B cell (primary cell): ENCODE measurements at regions of chr19 and their contacts with region 1.

Region 1: GRCh38 chr19:43983912-43984686 is at the start of gene ZNF155:
- DNase-seq: peak; percentile 84
- ATAC-seq: peak; percentile 92
- H3K4me3 ChIP-seq: peak within 1 kb of the TSS; percentile 79 to 93 (median 85)
- H3K4me3 Mint-ChIP-seq: peak within 1 kb of the TSS; percentile 95
- H3K27ac ChIP-seq: peak within 1 kb of the TSS; percentile 61 to 79
- H3K27ac Mint-ChIP-seq: peak within 1 kb of the TSS; percentile 80
- H3K4me1 ChIP-seq: peaks cover 3 to 14% of the 10 kb centered on the region in 2 donors
- H3K4me1 Mint-ChIP-seq: peaks cover 12% of the 10 kb centered on the region
- H3K27me3 ChIP-seq: no peaks in the 10 kb centered on the region
- H3K27me3 Mint-ChIP-seq: no peaks in the 10 kb centered on the region
- CTCF ChIP-seq: no peak
- total RNA-seq, gene ZNF155: 8.4 and 8.9 TPM in 2 replicates

Region 2: DNA sequence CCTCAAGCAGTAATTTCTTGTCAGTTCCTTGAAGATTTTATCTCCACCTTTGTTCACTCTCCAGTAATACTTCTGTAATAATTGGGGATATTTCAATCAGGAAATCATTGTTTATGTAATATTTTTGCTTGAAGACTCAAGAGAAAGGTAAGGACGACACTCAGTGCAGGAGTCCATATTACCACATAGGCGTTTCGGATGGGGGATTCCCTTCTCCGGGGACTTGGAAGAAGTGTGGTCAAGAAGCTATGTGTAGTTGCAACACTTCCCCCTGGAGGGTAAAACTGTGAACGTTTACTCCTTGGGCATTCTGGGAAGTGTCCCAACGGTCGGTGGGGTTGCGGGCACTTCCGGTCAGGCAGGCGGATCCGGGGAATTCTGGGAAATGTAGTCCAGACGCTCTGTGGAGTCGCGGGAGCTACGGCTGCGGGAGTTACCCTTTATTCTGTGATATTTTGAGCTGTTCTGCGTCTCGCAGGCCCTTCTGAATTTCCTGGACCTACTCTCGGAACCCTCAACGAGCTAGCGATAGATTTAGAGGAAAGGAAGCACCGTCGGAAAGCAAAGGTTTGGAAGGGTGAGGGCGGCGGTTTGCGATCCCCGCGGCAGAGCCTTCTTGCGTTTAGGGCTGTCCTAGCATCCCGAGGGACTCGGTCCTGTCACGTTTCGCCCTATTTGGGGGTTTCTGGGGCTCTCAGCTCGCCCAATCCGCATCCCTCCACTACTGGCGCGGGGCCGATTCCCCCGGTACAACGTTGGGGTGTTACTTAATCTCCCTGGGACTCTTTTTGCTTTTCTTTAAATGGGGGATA is 33.1 kb before region 1 on chr19 and contains the start of gene ZNF221:
- CTCF ChIA-PET with region 1: no interaction called
- POLR2A ChIA-PET with region 1: no interaction called
- intact Hi-C with region 1: loop called (anchors 1 kb)
- DNase-seq: peak; percentile 80
- ATAC-seq: peak; percentile 94
- H3K4me3 ChIP-seq: peak within 1 kb of the TSS; percentile 68 to 95 (median 88)
- H3K4me3 Mint-ChIP-seq: peak within 1 kb of the TSS; percentile 96
- H3K27ac ChIP-seq: peak within 1 kb of the TSS; percentile 22 to 51
- H3K27ac Mint-ChIP-seq: peak within 1 kb of the TSS; percentile 80
- H3K4me1 ChIP-seq: peaks cover 3 to 9% of the 10 kb centered on the region in 2 donors
- H3K4me1 Mint-ChIP-seq: peaks cover 12% of the 10 kb centered on the region
- H3K27me3 ChIP-seq: peaks cover 0 to 7% (median 2%) of the 10 kb centered on the region in 4 experiments
- H3K27me3 Mint-ChIP-seq: peaks cover 10% of the 10 kb centered on the region
- CTCF ChIP-seq: no peak
- total RNA-seq, gene ZNF221: 5.0 and 7.0 TPM in 2 replicates